Common myeloid progenitor, CD34-positive (primary cell): ENCODE measurements at regions of chr9 and their contacts with region 1.

Region 1: DNA sequence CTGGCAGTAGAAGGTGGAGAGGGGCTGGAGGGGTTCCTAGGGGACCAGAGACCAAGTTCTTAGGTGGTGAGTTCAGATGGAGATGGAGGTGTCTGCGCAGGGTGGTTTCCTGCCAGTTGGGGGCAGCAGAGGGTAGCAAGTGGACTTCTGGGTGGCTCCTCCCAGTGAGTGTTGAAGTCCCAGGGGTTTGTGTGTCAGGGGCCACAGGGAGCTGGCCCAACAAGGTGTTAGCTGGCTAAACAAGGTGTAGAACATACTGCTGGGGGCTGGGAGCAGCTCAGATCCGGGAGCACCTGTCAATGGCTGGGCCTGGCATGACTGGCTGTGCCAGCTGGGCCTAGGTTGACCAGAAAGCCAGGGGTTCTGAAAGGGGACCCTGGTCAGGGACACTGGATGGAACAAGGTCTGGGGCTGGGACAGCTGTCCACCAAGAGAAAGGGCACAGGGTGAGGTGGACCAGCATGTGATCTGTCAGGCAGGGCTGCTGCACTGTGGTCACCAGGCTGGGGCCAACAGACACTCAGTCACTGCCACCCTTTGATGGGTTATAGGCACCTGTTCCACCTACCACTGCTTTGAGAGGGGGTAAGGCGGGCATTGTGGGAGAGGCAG is 35.6 kb downstream of the DAB2IP start:
- DNase-seq: peak; percentile 75 to 88 (median 81)
- H3K4me3 ChIP-seq: no peak overlapping the region
- H3K27ac ChIP-seq: no peak overlapping the region
- H3K4me1 ChIP-seq: peaks cover 0 to 4% (median 0%) of the 10 kb centered on the region in 4 experiments
- H3K27me3 ChIP-seq: peaks cover 0 to 2% (median 0%) of the 10 kb centered on the region in 5 experiments

Region 2: GRCh38 chr9:121545875-121546423 is 141.1 kb before region 1 on chr9:
- CTCF ChIA-PET with region 1: interaction called, 67 read pairs
- POLR2A ChIA-PET with region 1: interaction called, 3 read pairs
- DNase-seq: peak; percentile 81 to 87 (median 85)
- H3K4me3 ChIP-seq: peak overlapping the region in 3 of 7 experiments; percentile 6 to 20 (median 11)
- H3K27ac ChIP-seq: no peak overlapping the region
- H3K4me1 ChIP-seq: peaks cover 0 to 16% (median 14%) of the 10 kb centered on the region in 4 experiments
- H3K27me3 ChIP-seq: peaks cover 0 to 5% (median 0%) of the 10 kb centered on the region in 5 experiments

Region 3: GRCh38 chr9:121621113-121621449 is 66.0 kb before region 1 on chr9:
- CTCF ChIA-PET with region 1: interaction called, 76 read pairs
- POLR2A ChIA-PET with region 1: no interaction called
- DNase-seq: peak; percentile 52 to 75 (median 73)
- H3K4me3 ChIP-seq: no peak overlapping the region
- H3K27ac ChIP-seq: no peak overlapping the region
- H3K4me1 ChIP-seq: peaks cover 0 to 10% (median 5%) of the 10 kb centered on the region in 4 experiments
- H3K27me3 ChIP-seq: no peaks in the 10 kb centered on the region

Region 4: GRCh38 chr9:121658166-121658565 is 28.9 kb before region 1 on chr9:
- CTCF ChIA-PET with region 1: interaction called, 38 read pairs
- POLR2A ChIA-PET with region 1: no interaction called
- DNase-seq: no peak
- H3K4me3 ChIP-seq: no peak overlapping the region
- H3K27ac ChIP-seq: no peak overlapping the region
- H3K4me1 ChIP-seq: no peaks in the 10 kb centered on the region
- H3K27me3 ChIP-seq: peaks cover 0 to 24% (median 4%) of the 10 kb centered on the region in 5 experiments

Region 5: GRCh38 chr9:121698627-121699570 is 11.9 kb after region 1 on chr9:
- CTCF ChIA-PET with region 1: interaction called, 134 read pairs
- POLR2A ChIA-PET with region 1: interaction called, 4 read pairs
- DNase-seq: peak; percentile 84 to 95 (median 93)
- H3K4me3 ChIP-seq: peak overlapping the region in 5 of 7 experiments; percentile 40 to 66 (median 53)
- H3K27ac ChIP-seq: no peak overlapping the region
- H3K4me1 ChIP-seq: peaks cover 5 to 37% (median 32%) of the 10 kb centered on the region in 4 experiments
- H3K27me3 ChIP-seq: peaks cover 0 to 66% (median 31%) of the 10 kb centered on the region in 5 experiments

Region 6: DNA sequence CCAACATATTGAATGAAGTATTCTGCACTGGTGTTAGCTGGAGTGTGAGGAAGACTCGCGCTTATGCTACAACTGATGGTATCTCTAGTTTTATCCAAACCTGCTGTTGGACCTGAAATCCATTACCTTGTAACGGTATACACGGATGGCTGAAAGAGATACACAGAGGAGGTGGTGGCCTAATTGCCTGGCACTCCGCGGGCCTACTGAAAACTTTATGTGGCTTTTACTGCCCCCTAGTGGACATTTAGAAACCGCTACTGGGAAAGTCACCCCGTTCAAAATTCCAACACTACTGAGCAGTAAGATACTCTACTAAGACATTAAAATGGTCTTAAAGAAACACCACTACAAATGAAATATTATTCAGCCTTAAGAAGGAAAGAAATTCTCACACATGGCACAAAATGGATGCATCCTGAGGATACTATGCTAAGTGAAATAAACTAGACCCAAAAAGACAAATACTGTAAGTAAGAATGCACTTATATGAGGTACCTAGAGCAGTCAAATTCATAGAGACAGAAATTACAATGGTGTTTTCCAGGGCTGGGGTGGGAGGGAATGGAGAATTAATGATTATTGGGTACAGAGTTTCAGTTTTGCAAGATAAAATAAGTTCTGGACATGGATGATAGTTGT is 305.7 kb after region 1 on chr9:
- CTCF ChIA-PET with region 1: interaction called, 19 read pairs
- POLR2A ChIA-PET with region 1: no interaction called
- DNase-seq: peak; percentile 75 to 84 (median 76)
- H3K4me3 ChIP-seq: no peak overlapping the region
- H3K27ac ChIP-seq: no peak overlapping the region
- H3K4me1 ChIP-seq: no peaks in the 10 kb centered on the region
- H3K27me3 ChIP-seq: no peaks in the 10 kb centered on the region